A673 (cell line): ENCODE measurements at regions of chr9 and their contacts with region 1.

Region 1: DNA sequence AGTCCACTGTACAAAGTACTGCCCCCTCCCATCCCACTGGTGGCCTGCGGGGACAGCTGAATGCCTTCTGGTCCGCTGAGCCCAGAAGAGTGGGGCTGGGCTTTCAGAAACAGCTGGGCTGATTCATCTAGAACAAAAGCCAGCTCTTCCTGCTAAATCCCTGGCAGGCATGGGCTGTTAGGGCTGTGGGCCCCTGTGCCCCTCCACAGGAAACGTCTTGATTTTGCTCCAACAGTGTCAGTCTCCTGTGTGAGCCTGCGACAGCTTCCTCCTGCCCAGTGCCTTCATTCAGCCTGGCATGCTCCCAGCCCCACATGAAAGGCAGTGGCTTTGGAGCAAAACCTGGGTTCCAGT is 6.9 kb upstream of the GSN start:
- DNase-seq: peak; percentile 93
- H3K4me3 ChIP-seq: no peak overlapping the region
- H3K27ac ChIP-seq: peak overlapping the region; percentile 56
- H3K4me1 ChIP-seq: peaks cover 28% of the 10 kb centered on the region
- H3K27me3 ChIP-seq: no peaks in the 10 kb centered on the region
- CTCF ChIP-seq: no peak

Region 2: GRCh38 chr9:121278535-121279261 is 17.6 kb after region 1 on chr9:
- CTCF ChIA-PET with region 1: interaction called, 10 read pairs
- POLR2A ChIA-PET with region 1: no interaction called
- intact Hi-C with region 1: no loop called
- DNase-seq: peak; percentile 86
- H3K4me3 ChIP-seq: no peak overlapping the region
- H3K27ac ChIP-seq: no peak overlapping the region
- H3K4me1 ChIP-seq: peaks cover 35% of the 10 kb centered on the region
- H3K27me3 ChIP-seq: no peaks in the 10 kb centered on the region
- CTCF ChIP-seq: peak; percentile 89

Region 3: GRCh38 chr9:121286973-121287741 is 26.1 kb after region 1 on chr9:
- CTCF ChIA-PET with region 1: no interaction called
- POLR2A ChIA-PET with region 1: interaction called, 3 read pairs
- intact Hi-C with region 1: loop called (anchors 2 kb)
- DNase-seq: peak; percentile 99
- H3K4me3 ChIP-seq: peak overlapping the region; percentile 7
- H3K27ac ChIP-seq: peak overlapping the region; percentile 89
- H3K4me1 ChIP-seq: peaks cover 84% of the 10 kb centered on the region
- H3K27me3 ChIP-seq: no peaks in the 10 kb centered on the region
- CTCF ChIP-seq: peak; percentile 36; the same call in 1 of the 2 replicates

Region 4: DNA sequence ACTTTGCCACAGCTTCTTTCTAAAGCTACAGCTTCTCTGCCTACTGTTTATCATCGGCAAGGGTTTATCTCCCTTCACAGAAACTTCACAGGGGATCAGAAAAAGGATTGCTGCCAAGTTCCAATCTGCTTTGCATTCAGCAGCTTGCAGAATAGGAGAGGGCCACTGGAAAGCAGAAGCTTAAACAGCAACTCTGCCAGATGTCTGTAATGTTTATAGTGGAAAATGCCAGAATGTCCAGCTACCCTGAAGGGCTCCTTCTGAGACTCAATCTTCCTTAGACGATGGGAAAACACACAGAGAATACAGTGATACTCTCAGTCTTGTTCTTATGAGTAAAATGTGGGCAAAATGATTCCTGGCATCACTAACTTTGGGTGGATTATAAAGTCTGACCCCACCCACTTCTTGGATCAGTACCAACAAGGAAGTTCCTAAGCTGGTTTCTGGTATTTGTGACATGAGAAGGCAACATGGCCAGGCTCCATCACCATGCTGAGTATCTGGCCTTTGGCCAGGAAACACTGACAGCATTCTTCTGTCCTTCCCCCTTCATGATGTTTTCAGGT is 90.0 kb after region 1 on chr9:
- CTCF ChIA-PET with region 1: no interaction called
- POLR2A ChIA-PET with region 1: no interaction called
- intact Hi-C with region 1: no loop called
- DNase-seq: peak; percentile 97
- H3K4me3 ChIP-seq: peak overlapping the region; percentile 23
- H3K27ac ChIP-seq: peak overlapping the region; percentile 84
- H3K4me1 ChIP-seq: peaks cover 41% of the 10 kb centered on the region
- H3K27me3 ChIP-seq: no peaks in the 10 kb centered on the region
- CTCF ChIP-seq: no peak